Activated B cell treated with CpG ODN at 0.5 μM for 24 hours (primary cell): ENCODE measurements at regions of chr11 and their contacts with region 1.

Region 1: DNA sequence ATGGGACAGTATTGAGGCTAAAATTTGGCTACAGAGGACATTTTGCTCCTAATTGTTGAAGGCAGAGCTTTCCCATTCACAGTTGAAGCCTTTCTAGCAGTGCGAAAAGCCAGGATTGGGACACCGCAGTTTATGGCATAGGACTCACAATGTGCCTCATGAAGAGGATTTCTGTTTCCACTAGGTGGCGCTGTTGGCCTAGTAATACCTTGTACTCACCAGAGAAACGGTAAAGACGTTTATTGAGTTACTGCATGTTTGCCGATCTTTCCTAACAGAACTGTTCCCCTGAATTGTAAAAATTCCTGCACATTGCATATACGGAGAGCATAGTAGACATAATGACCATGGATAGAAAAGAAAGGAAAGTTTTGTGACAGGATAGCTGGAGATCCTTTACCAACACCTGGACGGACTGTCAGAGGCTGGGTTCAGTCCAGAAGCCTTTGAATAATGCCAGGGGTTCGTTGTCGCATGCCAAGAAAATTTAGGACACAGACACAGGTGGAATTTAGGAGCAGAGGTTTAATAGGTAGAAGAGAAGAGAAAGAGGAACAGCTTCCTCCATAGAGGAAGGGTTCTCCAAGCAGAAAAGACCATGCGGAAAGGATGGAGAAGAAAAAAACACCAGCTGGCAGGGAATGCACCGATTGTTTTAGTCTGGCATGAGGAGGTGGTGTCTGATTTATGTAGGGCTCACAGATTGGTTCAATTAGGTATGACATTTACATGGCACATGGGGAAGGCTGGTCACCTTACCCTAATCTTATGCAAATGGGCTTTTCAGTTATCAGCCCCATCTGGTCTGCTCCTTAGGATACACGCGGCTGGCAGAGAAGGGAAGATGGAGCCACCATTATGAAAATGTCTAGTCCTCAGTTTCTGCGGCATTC is 10.8 kb upstream of the OR51D1 start:
- DNase-seq: no peak
- ATAC-seq: no peak
- H3K4me3 Mint-ChIP-seq: no peak overlapping the region
- H3K27ac Mint-ChIP-seq: no peak overlapping the region
- H3K4me1 Mint-ChIP-seq: no peaks in the 10 kb centered on the region
- H3K27me3 Mint-ChIP-seq: peaks cover 36% of the 10 kb centered on the region
- CTCF ChIP-seq: no peak

Region 2: DNA sequence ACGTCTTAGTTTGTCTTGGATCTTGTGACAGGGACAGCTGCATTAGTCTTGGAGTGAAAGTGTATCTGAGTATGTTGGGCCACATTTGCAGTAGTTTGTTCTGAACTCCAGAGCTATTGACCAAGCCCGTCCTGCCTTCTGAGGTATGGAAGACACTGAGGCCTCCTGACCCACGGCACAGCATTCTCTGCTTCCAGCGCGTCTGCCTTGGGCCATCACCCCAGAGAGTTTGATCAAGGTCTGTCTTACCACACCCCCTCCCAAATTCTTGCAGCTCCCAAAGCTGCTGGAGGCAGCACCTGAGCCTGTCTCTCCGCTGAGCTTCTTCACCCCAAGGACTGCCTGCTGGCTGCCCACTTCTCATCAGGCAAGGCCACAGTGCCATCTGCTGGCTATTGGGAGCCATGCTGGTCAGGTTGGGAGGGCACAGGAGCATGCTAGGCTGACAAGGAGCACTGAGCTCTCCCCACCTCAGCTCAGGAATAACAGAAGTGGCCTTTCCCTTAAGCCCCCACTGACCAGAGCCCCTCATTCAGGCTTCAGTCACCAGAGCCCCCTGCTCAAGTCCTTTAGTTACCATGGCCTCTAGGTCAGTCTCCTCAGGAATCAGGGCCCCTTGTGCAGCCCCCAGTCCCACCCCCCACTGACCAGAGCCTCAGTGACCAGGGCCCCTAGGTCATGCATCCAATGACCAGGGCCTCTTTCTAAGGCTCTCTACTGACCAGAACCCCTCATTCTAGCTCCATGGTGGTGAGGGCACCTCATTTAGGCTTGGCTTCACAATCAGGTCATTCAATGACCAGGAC is 1736.6 kb after region 1 on chr11:
- CTCF ChIA-PET with region 1: no interaction called
- POLR2A ChIA-PET with region 1: no interaction called
- intact Hi-C with region 1: loop called (anchors 5 kb)
- DNase-seq: peak; percentile 26
- ATAC-seq: peak; percentile 82
- H3K4me3 Mint-ChIP-seq: no peak overlapping the region
- H3K27ac Mint-ChIP-seq: no peak overlapping the region
- H3K4me1 Mint-ChIP-seq: no peaks in the 10 kb centered on the region
- H3K27me3 Mint-ChIP-seq: no peaks in the 10 kb centered on the region
- CTCF ChIP-seq: no peak